ENCODE measurements at regions of chr9 and their contacts with region 1.

Region 1: DNA sequence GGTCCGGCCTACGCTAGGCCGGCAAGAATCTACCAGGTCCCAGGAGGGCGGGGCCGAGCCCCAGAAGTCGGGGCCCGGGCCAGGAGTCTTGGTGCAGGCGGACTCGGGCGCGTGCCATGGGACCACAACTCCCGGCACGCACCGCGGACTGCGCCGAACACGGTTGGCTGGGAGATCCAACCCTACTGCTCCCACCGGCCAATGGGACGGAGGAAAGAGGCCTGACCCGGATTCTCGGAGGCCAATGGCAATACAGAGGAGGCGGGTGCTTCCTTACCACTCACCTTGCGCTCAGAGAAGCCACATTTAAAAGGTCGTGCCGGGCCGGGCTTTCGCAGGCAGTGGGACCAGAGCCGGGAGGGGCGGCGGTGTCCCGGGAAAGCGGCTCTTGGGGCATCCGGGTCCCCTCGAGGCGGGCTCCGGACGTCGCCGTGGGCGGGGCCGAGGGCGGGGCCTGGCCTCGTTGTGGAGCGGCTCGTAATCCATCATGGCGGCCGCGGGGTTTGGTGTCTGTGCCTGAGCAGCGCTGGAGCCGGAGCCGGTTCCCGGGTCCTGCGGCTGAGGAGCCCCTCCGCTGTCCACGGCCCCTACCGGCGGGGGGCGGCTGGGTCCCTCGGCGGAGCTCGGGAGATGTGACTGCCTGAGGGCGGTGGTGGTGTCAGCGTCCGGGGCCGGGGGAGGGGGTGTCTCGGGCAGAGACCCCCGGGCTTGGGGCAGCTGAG is 19.1 kb downstream of the EXOSC2 start:
- DNase-seq: peak; percentile 98 to 99 (median 99)
- ATAC-seq: peak; percentile 97 to 99 (median 98)
- H3K4me3 ChIP-seq: peak overlapping the region; percentile 56 to 100 (median 84)
- H3K27ac ChIP-seq: peak overlapping the region; percentile 93 to 99 (median 98)
- H3K4me1 ChIP-seq: peaks cover 0 to 48% (median 28%) of the 10 kb centered on the region in 12 donors
- H3K27me3 ChIP-seq: no peaks in the 10 kb centered on the region
- CTCF ChIP-seq: no peak
- POLR2A ChIP-seq: peak in 1 of 2 donors; percentile 80

Region 2: GRCh38 chr9:130199605-130200004 is 513.1 kb before region 1 on chr9:
- intact Hi-C with region 1: no loop called
- DNase-seq: no peak
- ATAC-seq: no peak
- H3K4me3 ChIP-seq: no peak overlapping the region
- H3K27ac ChIP-seq: peak overlapping the region in 1 of 12 donors; percentile 88
- H3K4me1 ChIP-seq: peaks cover 0 to 27% (median 3%) of the 10 kb centered on the region in 12 donors
- H3K27me3 ChIP-seq: no peaks in the 10 kb centered on the region
- CTCF ChIP-seq: no peak
- POLR2A ChIP-seq: no peak

Region 3: GRCh38 chr9:130693426-130694191 is 19.1 kb before region 1 on chr9 and contains the start of gene EXOSC2:
- intact Hi-C with region 1: loop called in 1 of 10 experiments (anchors 1 kb)
- DNase-seq: peak; percentile 98 to 99 (median 98)
- ATAC-seq: peak; percentile 95 to 98 (median 96)
- H3K4me3 ChIP-seq: peak within 1 kb of the TSS; percentile 52 to 85 (median 75)
- H3K27ac ChIP-seq: peak within 1 kb of the TSS in 11 of 12 donors; percentile 36 to 78 (median 58)
- H3K4me1 ChIP-seq: peaks cover 0 to 32% (median 16%) of the 10 kb centered on the region in 12 donors
- H3K27me3 ChIP-seq: no peaks in the 10 kb centered on the region
- CTCF ChIP-seq: peak in 1 of 12 donors; percentile 6
- POLR2A ChIP-seq: peak in 1 of 2 donors; percentile 68
- total RNA-seq, gene EXOSC2: 10.6 to 16.0 (median 13.1) TPM

Region 4: DNA sequence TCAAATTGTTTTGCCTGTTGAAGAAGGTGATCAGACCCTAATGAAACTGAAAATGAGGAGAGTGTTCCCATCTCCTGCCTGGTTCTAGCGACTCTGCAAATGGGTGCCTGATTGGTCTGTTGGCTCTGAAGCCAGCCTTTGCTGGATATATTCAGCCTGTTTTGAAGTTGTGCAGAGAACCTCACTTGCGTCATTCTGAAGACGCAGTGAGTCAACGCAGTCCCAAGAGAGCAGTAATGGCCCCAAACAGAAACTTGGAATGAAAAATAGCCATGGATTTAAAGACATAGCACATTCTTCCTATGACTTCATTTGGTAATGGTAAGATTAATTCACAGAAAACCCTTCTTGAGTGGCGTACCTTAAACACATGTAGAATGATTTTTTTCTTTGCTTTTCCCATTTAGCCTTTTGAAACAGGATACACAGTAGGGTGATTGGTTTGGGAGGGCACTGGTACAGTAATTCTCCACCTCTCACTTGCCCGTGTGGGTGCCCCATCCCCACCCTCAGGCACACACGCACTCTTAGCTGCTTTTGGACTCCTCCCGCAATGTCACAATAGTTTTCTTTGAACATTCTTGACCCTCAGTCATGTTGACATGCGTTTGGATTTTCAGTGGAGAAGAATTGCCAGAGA is 68.3 kb after region 1 on chr9:
- intact Hi-C with region 1: loop called in 1 of 10 experiments (anchors 5 kb)
- DNase-seq: peak in 4 of 5 donors; percentile 75 to 79 (median 76)
- ATAC-seq: peak; percentile 77 to 94 (median 86)
- H3K4me3 ChIP-seq: peak overlapping the region in 10 of 12 donors; percentile 6 to 55 (median 39)
- H3K27ac ChIP-seq: peak overlapping the region; percentile 74 to 95 (median 84)
- H3K4me1 ChIP-seq: peaks cover 0 to 55% (median 33%) of the 10 kb centered on the region in 12 donors
- H3K27me3 ChIP-seq: no peaks in the 10 kb centered on the region
- CTCF ChIP-seq: no peak
- POLR2A ChIP-seq: peak in 1 of 2 donors; percentile 53

Region 5: DNA sequence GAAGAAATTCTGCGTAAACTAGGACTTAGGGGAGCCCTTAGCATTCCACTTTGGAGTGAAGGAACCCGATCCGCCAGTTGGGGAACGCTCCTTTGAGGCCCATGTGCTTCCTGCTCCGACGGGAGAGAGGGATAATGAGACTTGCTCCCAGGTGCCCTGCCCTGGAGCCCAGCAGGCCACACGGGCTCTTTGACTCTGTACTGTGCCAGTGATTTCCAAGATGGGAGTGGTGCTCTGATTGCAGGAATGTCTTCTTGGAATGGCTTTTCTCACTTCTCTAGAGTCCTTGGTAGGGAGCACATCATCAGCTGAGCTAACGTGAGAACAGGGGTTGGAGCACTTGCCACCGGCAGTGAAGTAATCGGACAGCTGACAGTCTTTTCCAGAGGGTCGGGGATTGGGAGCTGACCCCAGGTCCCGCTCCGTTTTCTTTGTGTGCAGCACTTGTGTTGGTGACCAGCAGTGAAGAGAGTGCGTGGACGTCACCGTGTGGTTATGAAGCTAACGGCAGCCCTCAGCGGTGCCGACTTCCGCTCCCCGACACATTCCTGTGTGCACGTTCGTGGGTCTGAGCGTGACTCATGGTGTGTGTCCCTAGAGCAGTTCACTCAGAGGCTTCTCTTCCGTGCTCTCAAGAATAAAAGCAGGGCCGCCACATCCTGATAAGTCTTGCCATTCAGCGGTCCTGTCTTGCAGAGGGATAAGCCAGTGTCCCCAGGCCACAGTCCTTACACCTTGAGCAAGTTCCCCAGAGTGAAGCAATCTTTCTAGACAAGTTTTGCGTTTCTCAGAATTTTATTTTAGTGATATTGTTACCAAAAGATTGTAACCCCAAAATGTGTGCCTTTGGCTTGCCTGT is 148.0 kb after region 1 on chr9:
- intact Hi-C with region 1: loop called in 9 of 10 experiments (anchors 1 to 5 kb)
- DNase-seq: peak; percentile 83 to 91 (median 86)
- ATAC-seq: peak; percentile 77 to 97 (median 94)
- H3K4me3 ChIP-seq: peak overlapping the region in 2 of 12 donors; percentile 17 to 19
- H3K27ac ChIP-seq: peak overlapping the region; percentile 4 to 85 (median 70)
- H3K4me1 ChIP-seq: peaks cover 2 to 62% (median 46%) of the 10 kb centered on the region in 12 donors
- H3K27me3 ChIP-seq: no peaks in the 10 kb centered on the region
- CTCF ChIP-seq: peak; percentile 19 to 78 (median 56)
- POLR2A ChIP-seq: no peak

Measured in heart left ventricle (tissue), 16 donors.